ENCODE measurements at regions of chr4 and their contacts with region 1.

Region 1: DNA sequence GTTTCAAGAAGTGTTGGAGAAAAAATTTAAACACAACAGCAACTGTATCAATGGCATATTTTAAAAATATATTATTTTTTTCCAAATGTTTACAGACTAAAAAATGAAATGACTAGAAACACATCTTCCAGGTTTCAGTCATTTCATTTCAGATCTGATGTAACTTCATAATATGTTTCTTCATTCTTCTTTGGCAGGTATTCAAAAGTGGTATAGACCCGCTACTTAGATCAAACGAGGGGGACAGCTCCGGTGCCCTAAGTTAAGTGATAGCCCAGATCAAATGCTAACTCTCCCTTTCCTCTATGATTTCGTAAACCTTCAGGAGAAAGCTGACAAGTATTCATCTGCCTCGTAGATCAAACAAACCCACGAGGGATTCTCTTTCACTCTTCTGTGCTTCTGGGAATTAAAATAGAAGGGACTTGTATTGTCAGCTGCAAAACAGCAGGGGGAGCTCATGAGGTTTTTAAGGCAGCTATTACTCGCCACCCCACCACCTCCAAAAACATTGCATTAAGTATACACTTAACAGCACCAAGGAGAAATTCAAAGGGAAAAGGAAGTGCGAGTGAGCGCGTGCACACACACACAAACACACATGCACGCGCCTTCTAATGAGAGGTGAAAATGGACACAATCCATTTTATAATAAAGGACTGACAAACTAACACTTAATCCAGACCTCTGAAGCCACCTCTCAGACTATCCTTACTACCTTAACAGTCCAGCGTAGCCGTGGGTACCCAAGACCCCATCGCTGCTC is 21.4 kb downstream of the HELT start:
- DNase-seq: peak; percentile 37
- H3K4me3 ChIP-seq: no peak overlapping the region; the same call in 1 of the 2 replicates
- H3K27ac ChIP-seq: peak overlapping the region; percentile 46; the same call in 1 of the 2 replicates
- H3K4me1 ChIP-seq: no peaks in the 10 kb centered on the region
- H3K27me3 ChIP-seq: no peaks in the 10 kb centered on the region
- CTCF ChIP-seq: peak; percentile 79

Region 2: GRCh38 chr4:185142912-185143595 is 103.4 kb after region 1 on chr4 and contains the start of gene SLC25A4:
- CTCF ChIA-PET with region 1: no interaction called
- POLR2A ChIA-PET with region 1: interaction called, 12 read pairs
- intact Hi-C with region 1: no loop called
- DNase-seq: peak; percentile 37 to 81
- H3K4me3 ChIP-seq: peak within 1 kb of the TSS; percentile 71
- H3K27ac ChIP-seq: no peak within 1 kb of the TSS
- H3K4me1 ChIP-seq: peaks cover 8% of the 10 kb centered on the region; the same call in 1 of the 2 replicates
- H3K27me3 ChIP-seq: no peaks in the 10 kb centered on the region
- CTCF ChIP-seq: no peak; the same call in 1 of the 2 replicates
- total RNA-seq, gene SLC25A4: 15.6 and 15.9 TPM in 2 replicates

Measured in PC-9 (cell line).